Sigmoid colon (tissue), 7 donors: ENCODE measurements at regions of chr12 and their contacts with region 1.

Region 1: GRCh38 chr12:38316391-38317129 is at the start of gene ALG10B:
- DNase-seq: peak; percentile 97
- H3K4me3 ChIP-seq: peak within 1 kb of the TSS; percentile 53 to 87 (median 70)
- H3K27ac ChIP-seq: peak within 1 kb of the TSS; percentile 81 to 90 (median 88)
- H3K4me1 ChIP-seq: peaks cover 0 to 10% (median 2%) of the 10 kb centered on the region in 4 donors
- H3K27me3 ChIP-seq: no peaks in the 10 kb centered on the region
- CTCF ChIP-seq: peak in 3 of 4 experiments; percentile 23 to 72 (median 50)
- EP300 ChIP-seq: no peak
- POLR2A ChIP-seq: no peak
- total RNA-seq, gene ALG10B: 3.1 to 3.6 (median 3.4) TPM

Region 2: DNA sequence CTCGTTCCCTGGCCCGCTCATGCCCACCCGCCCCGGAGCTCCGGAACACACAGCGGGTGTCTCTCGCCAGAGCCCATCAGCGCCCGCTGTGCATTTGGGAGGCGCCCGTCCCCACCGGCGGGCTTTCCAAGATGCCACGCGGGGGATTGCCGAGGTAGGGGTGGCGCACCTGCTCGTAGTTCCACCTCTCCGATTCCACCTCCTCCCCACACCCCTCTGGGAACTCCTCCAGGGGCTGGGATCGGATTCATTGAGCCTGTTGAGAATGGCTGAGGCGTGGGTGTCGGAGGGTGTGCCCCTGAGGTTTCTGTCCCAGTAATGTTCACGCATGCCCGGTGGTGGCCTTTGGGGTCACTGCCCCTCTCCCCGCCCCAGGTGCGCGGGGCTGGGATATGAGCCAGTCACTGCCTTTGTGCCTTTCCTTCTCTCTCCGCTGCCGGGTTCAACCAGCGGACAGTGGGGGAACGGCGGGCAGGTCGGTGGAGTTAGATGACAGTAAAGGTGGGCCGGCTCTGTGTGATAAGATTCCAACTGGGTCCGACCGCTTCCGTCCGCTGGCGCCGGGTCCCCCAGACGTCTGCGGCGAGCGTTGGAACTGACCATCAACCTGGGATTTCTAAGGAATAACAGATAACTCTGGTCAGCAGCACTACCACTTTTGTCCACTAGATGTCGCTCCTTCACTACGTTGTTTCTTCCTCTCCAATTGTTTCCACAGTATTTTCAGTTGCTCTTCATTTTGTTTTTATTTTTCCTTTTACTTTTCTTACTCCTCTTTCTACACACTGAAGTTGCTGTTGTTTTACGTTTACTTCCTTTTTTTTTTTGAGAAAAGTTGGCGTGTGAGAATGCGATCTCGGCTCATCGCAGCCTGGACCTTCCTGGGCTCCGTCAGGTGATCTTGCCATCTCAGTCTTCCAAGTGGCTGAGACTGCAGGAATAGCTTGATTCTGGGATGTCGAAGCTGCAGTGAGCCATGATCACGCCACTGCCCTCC is 178.0 kb before region 1 on chr12:
- intact Hi-C with region 1: loop called (anchors 1 kb)
- DNase-seq: peak; percentile 81
- H3K4me3 ChIP-seq: peak overlapping the region; percentile 20 to 42 (median 33)
- H3K27ac ChIP-seq: no peak overlapping the region
- H3K4me1 ChIP-seq: peaks cover 0 to 7% (median 7%) of the 10 kb centered on the region in 4 donors
- H3K27me3 ChIP-seq: peaks cover 0 to 13% (median 6%) of the 10 kb centered on the region in 3 donors
- CTCF ChIP-seq: peak; percentile 79 to 98 (median 92)
- EP300 ChIP-seq: no peak
- POLR2A ChIP-seq: no peak